Activated T-helper 2 cell treated with anti-CD3 and anti-CD28 coated beads, Interferon-gamma antibody, Interleukin-2, Interleukin-4, amounts not matched to agents 10 μg/mL and 5 μg/mL and 100 μg/mL, durations not matched to agents 14 hours and 24 hours and 36 hours (primary cell): ENCODE measurements at regions of chr12 and their contacts with region 1.

Region 1: DNA sequence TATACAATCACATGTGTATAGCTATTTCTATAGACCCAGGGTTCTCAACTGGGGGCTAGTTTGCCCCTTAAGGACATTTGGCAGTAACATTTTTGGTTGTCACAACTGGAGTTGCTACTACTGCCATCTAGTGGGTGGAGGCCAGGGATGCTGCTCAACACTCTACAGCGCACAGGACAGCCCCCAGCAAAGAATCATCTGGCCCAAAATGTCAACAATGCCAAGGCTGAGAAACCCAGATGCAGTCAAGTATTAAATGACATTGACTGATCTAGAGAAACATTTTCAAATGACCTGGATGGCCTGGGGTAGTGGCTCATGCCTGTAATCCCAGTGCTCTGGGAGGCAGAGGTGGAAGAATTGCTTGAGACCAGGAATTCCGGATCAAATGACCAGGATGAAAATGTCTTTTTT is 5.8 kb downstream of the WSB2 start:
- DNase-seq: peak; percentile 65
- H3K4me3 Mint-ChIP-seq: no peak overlapping the region
- H3K27ac Mint-ChIP-seq: peak overlapping the region; percentile 51
- H3K4me1 Mint-ChIP-seq: peaks cover 53% of the 10 kb centered on the region
- H3K27me3 Mint-ChIP-seq: no peaks in the 10 kb centered on the region

Region 2: DNA sequence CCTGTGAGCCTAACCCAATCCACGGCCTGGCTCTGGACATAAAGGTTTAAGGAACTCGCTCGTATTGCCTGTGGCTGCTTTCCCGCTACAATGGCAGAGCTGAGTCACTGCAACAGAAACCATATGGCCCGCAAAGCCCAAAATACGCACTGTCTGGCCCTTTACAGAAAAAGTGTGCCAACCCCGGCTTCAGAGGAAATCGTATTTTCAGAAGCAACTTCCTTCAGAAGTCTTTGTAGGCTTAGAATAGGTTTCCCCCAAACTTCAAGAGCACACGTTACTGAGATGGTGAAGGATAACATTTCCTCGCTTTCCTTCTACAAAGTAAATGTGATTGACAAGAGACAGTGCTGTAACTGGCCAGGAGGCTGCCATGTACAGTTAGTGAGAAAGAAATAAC is 921.1 kb before region 1 on chr12:
- intact Hi-C with region 1: loop called (anchors 10 kb)
- DNase-seq: peak; percentile 49
- H3K4me3 Mint-ChIP-seq: peak overlapping the region; percentile 2
- H3K27ac Mint-ChIP-seq: peak overlapping the region; percentile 88
- H3K4me1 Mint-ChIP-seq: peaks cover 12% of the 10 kb centered on the region
- H3K27me3 Mint-ChIP-seq: no peaks in the 10 kb centered on the region

Region 3: DNA sequence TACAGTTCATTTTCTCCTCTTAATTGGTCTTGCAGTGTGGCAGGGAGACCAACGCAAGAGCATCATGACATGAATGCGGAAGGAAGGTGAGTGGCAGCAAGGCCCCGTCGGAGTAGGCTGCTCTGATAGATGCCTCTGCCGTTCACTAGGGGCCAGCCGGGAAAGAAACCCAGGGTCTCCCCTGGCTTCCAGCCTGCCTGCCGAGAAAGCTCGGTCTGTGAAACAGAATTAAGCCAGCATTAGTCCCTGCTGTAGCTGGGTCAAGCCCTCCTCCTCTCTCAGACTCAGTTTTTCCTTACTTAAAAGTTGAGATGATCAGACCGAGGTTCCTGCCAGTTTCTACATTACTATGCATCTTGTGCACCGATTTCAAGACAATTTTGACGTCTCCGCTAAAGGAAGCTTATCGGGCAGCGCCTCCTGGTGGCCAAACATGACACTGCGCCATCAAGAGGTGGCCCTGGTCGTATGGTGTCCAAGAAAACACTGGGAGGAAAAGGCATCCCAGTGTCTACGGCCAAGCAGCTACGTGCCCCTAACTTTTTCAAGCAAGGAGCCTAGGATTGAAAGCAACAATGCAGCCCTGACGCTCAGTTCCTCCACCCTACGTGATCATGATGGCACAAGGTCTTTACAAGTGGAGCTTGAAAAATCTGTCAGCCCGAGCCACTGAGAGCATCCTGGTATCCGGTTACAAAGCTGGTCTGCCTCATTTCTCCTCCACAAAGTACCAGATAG is 218.0 kb before region 1 on chr12:
- intact Hi-C with region 1: no loop called
- DNase-seq: peak; percentile 60
- H3K4me3 Mint-ChIP-seq: no peak overlapping the region
- H3K27ac Mint-ChIP-seq: no peak overlapping the region
- H3K4me1 Mint-ChIP-seq: peaks cover 3% of the 10 kb centered on the region
- H3K27me3 Mint-ChIP-seq: no peaks in the 10 kb centered on the region

Region 4: GRCh38 chr12:117874842-117875434 is 180.2 kb before region 1 on chr12:
- intact Hi-C with region 1: loop called (anchors 5 kb)
- DNase-seq: peak; percentile 48
- H3K4me3 Mint-ChIP-seq: no peak overlapping the region
- H3K27ac Mint-ChIP-seq: no peak overlapping the region
- H3K4me1 Mint-ChIP-seq: peaks cover 4% of the 10 kb centered on the region
- H3K27me3 Mint-ChIP-seq: peaks cover 18% of the 10 kb centered on the region

Region 5: DNA sequence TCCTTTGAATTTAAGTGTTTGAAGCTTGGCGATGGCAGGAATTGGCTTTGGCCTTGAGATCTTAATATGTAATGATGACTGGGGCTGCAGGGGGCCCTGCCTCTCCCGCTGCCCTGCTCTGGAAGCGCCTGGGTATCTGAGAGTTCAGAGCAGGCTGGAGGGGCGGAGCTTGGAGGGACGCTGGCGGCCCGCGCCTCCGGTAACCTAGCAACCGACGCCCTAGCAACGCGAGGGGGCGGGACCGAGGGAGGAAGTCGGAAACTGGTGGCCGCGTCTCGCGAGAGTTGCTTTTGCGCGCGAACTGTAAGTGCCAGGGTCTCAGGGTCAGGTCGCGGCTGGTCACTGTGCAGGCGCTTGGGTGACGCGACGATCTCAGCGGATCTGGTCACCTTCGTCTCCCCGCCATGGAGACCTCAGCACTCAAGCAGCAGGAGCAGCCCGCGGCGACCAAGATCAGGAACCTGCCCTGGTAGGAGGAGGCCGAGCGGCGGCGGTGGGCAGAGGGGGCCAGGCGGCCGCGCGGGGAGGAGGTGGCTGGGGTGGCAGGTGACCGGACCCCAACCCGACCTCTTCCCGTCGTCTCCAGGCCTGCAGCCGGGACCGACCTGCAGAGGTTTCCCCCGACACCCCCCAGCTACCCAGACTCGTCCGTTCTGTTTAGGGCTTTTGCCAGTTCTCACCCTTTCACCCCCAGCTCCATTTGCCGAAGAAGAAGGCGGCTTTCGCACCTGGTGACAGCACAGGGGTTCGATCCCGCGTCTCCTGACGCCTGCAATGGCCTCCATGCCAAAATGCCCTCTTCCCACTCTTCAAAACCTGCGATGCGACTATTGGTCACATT is 38.5 kb before region 1 on chr12 and contains the start of gene RFC5:
- intact Hi-C with region 1: loop called (anchors 1 kb)
- DNase-seq: peak; percentile 95
- H3K4me3 Mint-ChIP-seq: peak within 1 kb of the TSS; percentile 88
- H3K27ac Mint-ChIP-seq: peak within 1 kb of the TSS; percentile 88
- H3K4me1 Mint-ChIP-seq: peaks cover 16% of the 10 kb centered on the region
- H3K27me3 Mint-ChIP-seq: peaks cover 2% of the 10 kb centered on the region
- total RNA-seq, gene RFC5: 61.9 and 65.8 TPM in 2 replicates

Region 6: DNA sequence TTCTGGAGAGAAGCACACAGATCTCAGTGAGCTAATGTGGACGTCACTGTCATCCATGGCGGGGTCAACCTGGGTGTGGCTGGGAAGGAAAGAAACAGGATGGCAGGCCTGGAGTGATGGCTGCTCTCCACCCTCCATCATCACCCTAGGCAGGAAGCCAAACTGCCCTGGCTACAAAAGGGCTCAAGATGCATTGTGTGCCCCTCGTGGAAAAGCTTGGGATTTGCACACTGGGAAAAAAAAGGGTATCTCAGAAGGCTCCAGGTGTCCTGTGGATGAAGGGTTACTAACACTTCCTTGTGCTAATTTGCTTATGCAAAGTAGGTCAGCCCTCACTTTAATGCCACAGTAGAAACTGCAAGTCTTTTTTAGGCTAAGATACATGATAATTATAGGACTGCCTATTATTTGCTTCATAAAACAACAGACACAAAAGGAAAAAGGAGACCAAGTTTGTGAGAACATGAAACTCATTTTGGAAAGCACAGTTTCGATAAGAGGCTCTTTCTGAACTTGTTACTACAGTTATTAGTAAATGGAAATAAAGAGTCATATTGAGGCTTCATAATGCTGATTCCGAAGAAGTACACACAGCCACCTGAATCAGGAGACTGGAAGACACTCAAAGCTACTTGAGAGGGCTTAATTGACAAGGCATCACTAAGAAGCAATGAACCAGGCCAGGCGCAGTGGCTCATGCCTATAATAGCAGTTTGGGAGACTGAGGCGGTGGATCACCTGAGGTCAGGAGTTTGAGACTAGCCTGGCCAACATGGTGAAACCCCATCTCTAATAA is 19.7 kb before region 1 on chr12:
- intact Hi-C with region 1: loop called (anchors 1 kb)
- DNase-seq: no peak
- H3K4me3 Mint-ChIP-seq: peak overlapping the region; percentile 28
- H3K27ac Mint-ChIP-seq: peak overlapping the region; percentile 97
- H3K4me1 Mint-ChIP-seq: peaks cover 36% of the 10 kb centered on the region
- H3K27me3 Mint-ChIP-seq: no peaks in the 10 kb centered on the region

Region 7: DNA sequence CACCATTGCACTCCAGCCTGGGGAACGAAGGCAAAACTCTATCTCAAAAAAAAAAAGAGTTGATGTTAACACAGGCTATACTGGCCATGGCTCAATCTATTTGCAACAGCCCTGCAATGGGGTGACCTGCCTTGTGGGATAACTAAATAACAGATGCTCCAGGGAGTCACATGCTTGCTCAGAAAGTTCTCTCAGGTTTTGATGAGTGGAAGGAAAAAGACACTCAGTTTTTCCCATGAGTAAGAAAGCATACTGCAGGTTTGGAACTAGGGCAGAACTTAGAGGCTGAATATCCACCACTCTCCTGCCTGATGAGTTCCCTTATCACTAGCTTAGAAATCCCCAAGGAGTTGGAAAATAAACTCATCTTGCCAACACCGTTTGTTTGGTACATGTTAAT is 11.1 kb before region 1 on chr12:
- intact Hi-C with region 1: loop called (anchors 1 kb)
- DNase-seq: no peak
- H3K4me3 Mint-ChIP-seq: peak overlapping the region; percentile 35
- H3K27ac Mint-ChIP-seq: peak overlapping the region; percentile 92
- H3K4me1 Mint-ChIP-seq: peaks cover 38% of the 10 kb centered on the region
- H3K27me3 Mint-ChIP-seq: no peaks in the 10 kb centered on the region

Region 8: GRCh38 chr12:118220702-118221101 is 165.6 kb after region 1 on chr12:
- intact Hi-C with region 1: no loop called
- DNase-seq: no peak
- H3K4me3 Mint-ChIP-seq: no peak overlapping the region
- H3K27ac Mint-ChIP-seq: no peak overlapping the region
- H3K4me1 Mint-ChIP-seq: no peaks in the 10 kb centered on the region
- H3K27me3 Mint-ChIP-seq: no peaks in the 10 kb centered on the region

Region 9: GRCh38 chr12:118307069-118307954 is 252.2 kb after region 1 on chr12:
- intact Hi-C with region 1: loop called (anchors 5 kb)
- DNase-seq: no peak
- H3K4me3 Mint-ChIP-seq: peak overlapping the region; percentile 73
- H3K27ac Mint-ChIP-seq: peak overlapping the region; percentile 72
- H3K4me1 Mint-ChIP-seq: peaks cover 29% of the 10 kb centered on the region
- H3K27me3 Mint-ChIP-seq: no peaks in the 10 kb centered on the region